MCF 10A (cell line): ENCODE measurements at regions of chr3 and their contacts with region 1.

Region 1: DNA sequence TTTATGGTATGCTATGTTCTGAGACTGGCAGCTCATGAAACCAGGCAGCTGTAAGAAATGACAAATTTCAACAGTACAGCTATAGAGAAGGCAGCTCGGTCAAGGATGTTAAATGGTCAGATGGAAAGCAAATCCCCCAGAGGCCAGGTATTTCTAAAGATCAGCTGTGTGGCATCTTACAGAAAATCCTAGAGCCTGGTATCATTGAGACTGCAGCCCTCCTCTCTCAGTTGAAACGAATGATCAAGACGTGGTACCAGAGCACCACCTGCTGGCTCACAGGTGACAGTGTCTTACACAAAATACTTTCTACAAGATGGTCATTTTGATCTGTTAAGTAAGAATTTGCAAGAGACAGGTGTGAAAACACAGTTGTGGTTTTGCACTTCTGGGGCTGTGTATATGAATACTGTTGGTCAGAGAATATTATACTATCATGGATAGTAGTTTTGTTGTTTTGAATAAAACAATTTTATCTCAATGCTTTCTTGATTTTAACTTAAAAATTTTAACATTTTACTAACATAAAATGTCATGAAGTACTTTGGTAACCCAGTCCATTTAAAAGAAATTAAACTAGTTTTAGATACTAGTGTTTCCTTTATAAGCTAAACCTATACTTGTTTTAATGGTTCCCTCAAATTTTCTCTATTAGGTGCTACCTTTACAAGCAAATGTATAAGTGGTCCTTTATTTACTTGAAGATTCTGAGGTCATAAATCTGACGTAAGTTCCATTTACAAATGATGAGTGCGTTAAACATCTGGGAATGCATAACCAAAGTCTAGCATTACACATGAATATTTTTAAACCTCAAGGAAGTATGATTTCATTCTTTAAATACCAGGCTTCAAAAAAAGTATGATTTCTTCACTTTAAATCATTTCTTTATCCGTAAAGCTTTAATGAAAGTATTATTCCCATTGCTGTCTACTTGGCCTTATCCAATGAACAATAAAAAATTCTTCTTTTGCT is 121.8 kb downstream of the PDZRN3 start:
- DNase-seq: peak; percentile 73
- H3K4me3 Mint-ChIP-seq: no peak overlapping the region
- H3K27ac Mint-ChIP-seq: no peak overlapping the region
- H3K4me1 Mint-ChIP-seq: no peaks in the 10 kb centered on the region
- H3K27me3 Mint-ChIP-seq: peaks cover 10% of the 10 kb centered on the region
- CTCF ChIP-seq: peak; percentile 69

Region 2: GRCh38 chr3:73432023-73432705 is 70.7 kb before region 1 on chr3:
- CTCF ChIA-PET with region 1: interaction called, 4 read pairs
- POLR2A ChIA-PET with region 1: no interaction called
- intact Hi-C with region 1: loop called (anchors 1 kb)
- DNase-seq: peak; percentile 66
- H3K4me3 Mint-ChIP-seq: no peak overlapping the region
- H3K27ac Mint-ChIP-seq: no peak overlapping the region
- H3K4me1 Mint-ChIP-seq: no peaks in the 10 kb centered on the region
- H3K27me3 Mint-ChIP-seq: peaks cover 55% of the 10 kb centered on the region
- CTCF ChIP-seq: peak; percentile 46

Region 3: DNA sequence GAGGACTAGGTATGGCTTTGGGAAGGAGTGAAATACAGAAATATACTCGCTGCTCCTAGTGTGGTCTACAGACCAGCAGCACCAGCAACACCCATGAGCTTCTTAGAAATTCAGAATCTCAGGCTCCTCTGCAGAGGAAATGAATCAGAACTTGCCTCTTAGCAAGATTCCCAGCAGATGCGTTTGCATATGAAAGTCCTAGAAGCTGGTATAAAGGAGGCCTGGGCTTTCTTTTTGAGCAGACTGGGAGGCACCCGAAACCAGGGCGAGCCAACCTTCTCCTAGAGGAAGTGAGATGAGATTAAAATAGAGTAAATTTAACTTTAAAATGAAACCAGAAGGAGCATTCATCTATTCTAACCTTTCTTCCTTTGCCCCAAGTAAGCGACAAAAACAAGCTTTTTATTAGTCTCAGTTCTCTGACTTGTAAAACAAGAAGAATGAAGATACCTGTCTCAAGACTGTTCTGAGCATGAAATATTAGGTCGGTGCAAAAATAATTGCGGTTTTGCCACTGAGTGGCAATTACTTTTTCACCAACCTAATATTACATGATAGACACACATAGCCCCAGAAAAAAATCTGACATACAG is 18.1 kb before region 1 on chr3:
- CTCF ChIA-PET with region 1: interaction called, 42 read pairs
- POLR2A ChIA-PET with region 1: no interaction called
- intact Hi-C with region 1: no loop called
- DNase-seq: no peak
- H3K4me3 Mint-ChIP-seq: no peak overlapping the region
- H3K27ac Mint-ChIP-seq: no peak overlapping the region
- H3K4me1 Mint-ChIP-seq: peaks cover 5% of the 10 kb centered on the region
- H3K27me3 Mint-ChIP-seq: no peaks in the 10 kb centered on the region
- CTCF ChIP-seq: no peak

Region 4: GRCh38 chr3:73520865-73521461 is 18.1 kb after region 1 on chr3:
- CTCF ChIA-PET with region 1: interaction called, 16 read pairs
- POLR2A ChIA-PET with region 1: no interaction called
- intact Hi-C with region 1: no loop called
- DNase-seq: no peak
- H3K4me3 Mint-ChIP-seq: no peak overlapping the region
- H3K27ac Mint-ChIP-seq: no peak overlapping the region
- H3K4me1 Mint-ChIP-seq: peaks cover 6% of the 10 kb centered on the region
- H3K27me3 Mint-ChIP-seq: peaks cover 9% of the 10 kb centered on the region
- CTCF ChIP-seq: no peak

Region 5: GRCh38 chr3:74443102-74443501 is 940.2 kb after region 1 on chr3:
- CTCF ChIA-PET with region 1: no interaction called
- POLR2A ChIA-PET with region 1: no interaction called
- intact Hi-C with region 1: no loop called
- DNase-seq: peak; percentile 71
- H3K4me3 Mint-ChIP-seq: no peak overlapping the region
- H3K27ac Mint-ChIP-seq: peak overlapping the region; percentile 7
- H3K4me1 Mint-ChIP-seq: peaks cover 7% of the 10 kb centered on the region
- H3K27me3 Mint-ChIP-seq: no peaks in the 10 kb centered on the region
- CTCF ChIP-seq: no peak